ENCODE measurements at regions of chr10 and their contacts with region 1.

Region 1: DNA sequence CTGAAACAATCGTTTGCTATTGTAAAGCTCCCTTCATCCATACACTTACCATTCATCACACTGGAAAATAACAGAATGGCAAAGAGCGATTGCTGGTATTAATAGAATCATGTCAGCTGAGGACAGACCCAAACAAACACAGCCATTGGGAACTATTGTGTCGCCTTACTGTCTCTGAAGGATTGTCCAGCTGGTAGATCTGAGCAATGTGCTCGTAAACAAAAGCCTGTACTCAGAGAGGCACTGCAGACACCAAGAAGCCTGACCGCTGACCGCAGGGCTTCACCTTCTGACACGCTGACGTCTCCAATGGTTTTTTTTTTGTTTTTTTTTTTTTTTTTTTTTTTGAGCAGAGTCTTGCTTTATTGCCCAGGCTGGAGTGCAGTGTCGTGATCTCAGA is 151.0 kb upstream of the FRMD4A start:
- DNase-seq: no peak
- H3K4me3 ChIP-seq: no peak overlapping the region
- CTCF ChIP-seq: no peak

Region 2: GRCh38 chr10:14137391-14137790 is 344.4 kb before region 1 on chr10:
- in situ Hi-C with region 1: no loop called
- DNase-seq: no peak
- H3K4me3 ChIP-seq: no peak overlapping the region
- CTCF ChIP-seq: no peak

Region 3: DNA sequence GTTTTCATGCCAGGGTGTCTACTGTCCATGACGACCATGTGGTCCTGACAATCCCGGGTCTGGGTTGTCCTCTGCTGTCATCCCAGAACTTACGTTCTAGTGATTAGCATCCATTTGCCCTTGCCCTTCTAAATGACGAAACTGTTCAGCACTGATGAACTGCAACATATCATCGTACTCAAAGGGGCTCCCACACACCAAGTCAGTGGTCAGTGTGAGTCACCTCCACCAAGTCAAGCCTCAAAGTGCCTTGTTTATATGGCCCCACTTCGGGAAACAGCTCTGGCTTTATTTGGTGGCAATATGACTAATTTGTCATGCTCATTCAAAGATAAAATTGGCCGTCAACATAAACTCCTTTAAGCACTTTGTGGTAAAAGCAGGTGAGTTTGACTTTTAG is 261.7 kb before region 1 on chr10:
- in situ Hi-C with region 1: loop called (anchors 5 kb)
- DNase-seq: no peak
- H3K4me3 ChIP-seq: no peak overlapping the region
- CTCF ChIP-seq: no peak

Region 4: DNA sequence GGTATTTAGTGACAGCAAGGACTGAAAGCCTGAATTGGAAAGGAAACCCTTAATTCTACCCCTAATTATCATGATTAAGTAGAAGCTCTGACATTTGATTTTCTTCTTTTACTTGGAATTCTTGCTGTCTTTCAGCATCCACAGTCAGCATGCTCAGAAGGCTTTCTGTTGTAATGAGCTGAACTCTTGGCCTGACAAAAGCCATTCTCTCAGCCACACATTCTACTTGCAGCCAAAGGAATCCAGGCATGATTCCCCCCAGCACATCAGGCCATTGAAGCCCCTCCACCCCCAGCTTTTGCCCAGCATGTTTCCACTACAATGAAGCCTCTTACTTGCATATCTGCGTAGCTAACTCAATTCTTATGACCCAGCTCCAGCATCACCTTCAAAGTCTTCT is 56.7 kb before region 1 on chr10:
- in situ Hi-C with region 1: no loop called
- DNase-seq: no peak
- H3K4me3 ChIP-seq: no peak overlapping the region
- CTCF ChIP-seq: no peak

Measured in astrocyte of the cerebellum (primary cell).